ENCODE measurements at regions of chr14 and their contacts with region 1.

Region 1: GRCh38 chr14:21103710-21104447 is 3.0 kb downstream of the TMEM253 start:
- DNase-seq: peak; percentile 91
- ATAC-seq: peak; percentile 88
- H3K4me3 Mint-ChIP-seq: peak overlapping the region; percentile 79
- H3K27ac Mint-ChIP-seq: peak overlapping the region; percentile 90
- H3K4me1 Mint-ChIP-seq: peaks cover 21% of the 10 kb centered on the region
- H3K27me3 Mint-ChIP-seq: peaks cover 11% of the 10 kb centered on the region
- CTCF ChIP-seq: no peak

Region 2: DNA sequence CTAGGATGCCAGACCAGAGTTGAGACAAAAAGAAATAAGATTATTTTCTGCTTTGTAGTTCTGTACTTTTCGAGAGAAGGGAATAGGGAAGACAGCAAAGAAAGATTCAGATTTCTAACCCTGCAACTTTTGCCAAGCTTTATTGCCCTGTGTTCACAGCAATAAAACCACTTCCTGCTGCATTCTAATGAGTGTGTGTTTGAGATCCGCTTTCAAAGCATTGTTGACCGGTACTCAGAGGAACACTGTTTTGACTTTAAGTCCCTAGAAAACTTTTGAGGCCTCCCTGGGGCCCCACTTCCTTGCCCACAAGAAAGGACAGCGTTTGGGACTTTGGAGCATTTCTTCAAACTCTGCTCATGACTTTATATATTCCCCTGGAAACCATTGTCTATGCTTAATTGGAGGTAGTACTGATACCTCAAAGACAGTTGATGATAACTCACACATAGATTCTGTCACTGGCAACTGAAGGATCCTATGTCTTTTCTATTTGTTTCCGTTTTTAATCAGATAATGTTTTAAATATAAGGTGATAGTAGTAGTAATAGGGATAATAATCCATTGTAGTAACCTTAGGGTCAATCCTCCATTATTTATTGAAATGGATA is 321.5 kb before region 1 on chr14:
- CTCF ChIA-PET with region 1: no interaction called
- POLR2A ChIA-PET with region 1: no interaction called
- intact Hi-C with region 1: loop called (anchors 10 kb)
- DNase-seq: no peak
- ATAC-seq: peak; percentile 59
- H3K4me3 Mint-ChIP-seq: peak overlapping the region; percentile 86
- H3K27ac Mint-ChIP-seq: peak overlapping the region; percentile 98
- H3K4me1 Mint-ChIP-seq: peaks cover 68% of the 10 kb centered on the region
- H3K27me3 Mint-ChIP-seq: no peaks in the 10 kb centered on the region
- CTCF ChIP-seq: no peak

Region 3: GRCh38 chr14:20989572-20990551 is 114.0 kb before region 1 on chr14 and contains the start of gene METTL17:
- CTCF ChIA-PET with region 1: interaction called, 3 read pairs
- POLR2A ChIA-PET with region 1: no interaction called
- intact Hi-C with region 1: loop called (anchors 1 kb)
- DNase-seq: peak; percentile 68
- ATAC-seq: peak; percentile 97
- H3K4me3 Mint-ChIP-seq: peak within 1 kb of the TSS; percentile 94
- H3K27ac Mint-ChIP-seq: peak within 1 kb of the TSS; percentile 89
- H3K4me1 Mint-ChIP-seq: peaks cover 31% of the 10 kb centered on the region
- H3K27me3 Mint-ChIP-seq: no peaks in the 10 kb centered on the region
- CTCF ChIP-seq: no peak
- total RNA-seq, gene METTL17: 94.2 and 94.7 TPM in 2 replicates

Region 4: DNA sequence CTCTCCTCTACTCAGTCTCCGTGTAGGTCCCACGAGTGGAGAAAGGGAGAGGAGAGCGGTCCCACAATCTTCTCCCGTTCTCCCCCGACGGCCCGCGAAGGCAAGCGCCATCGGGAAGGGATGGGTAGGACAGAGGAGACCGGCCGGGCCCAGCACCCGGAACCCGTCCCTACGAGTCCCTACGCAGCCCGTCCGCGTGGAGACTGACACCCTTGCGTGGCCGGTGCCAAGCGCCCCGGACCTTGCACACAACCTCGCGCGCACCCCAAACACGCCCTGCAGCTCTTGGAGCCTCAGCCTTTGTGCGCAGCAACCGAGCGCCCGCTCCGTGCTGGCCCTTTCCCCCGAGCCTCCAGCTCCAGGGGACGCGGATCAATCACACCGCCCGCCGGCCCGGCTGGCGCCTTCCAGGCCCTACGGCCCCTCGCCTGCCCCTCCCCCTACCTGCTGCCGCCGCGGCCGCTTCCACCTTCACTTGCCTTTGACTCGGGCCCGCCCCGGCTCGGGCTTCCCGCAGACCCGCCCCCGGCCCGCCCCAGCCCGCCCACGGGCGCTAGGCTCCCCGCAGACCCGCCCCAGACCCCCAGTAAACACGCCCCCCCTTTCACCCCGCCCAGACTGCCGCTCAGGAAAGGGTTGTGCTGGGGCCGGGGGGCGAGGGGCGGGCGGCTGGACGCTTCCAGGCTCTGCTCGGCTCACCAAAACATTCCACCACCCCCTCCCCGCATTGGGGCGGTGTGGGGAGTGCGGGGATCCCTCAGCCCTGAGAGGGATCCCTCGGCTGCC is 79.1 kb before region 1 on chr14 and contains the start of gene NDRG2:
- CTCF ChIA-PET with region 1: interaction called, 257 read pairs
- POLR2A ChIA-PET with region 1: interaction called, 3 read pairs
- intact Hi-C with region 1: loop called (anchors 1 kb)
- DNase-seq: peak; percentile 64
- ATAC-seq: peak; percentile 92
- H3K4me3 Mint-ChIP-seq: peak within 1 kb of the TSS; percentile 88
- H3K27ac Mint-ChIP-seq: peak within 1 kb of the TSS; percentile 8
- H3K4me1 Mint-ChIP-seq: peaks cover 18% of the 10 kb centered on the region
- H3K27me3 Mint-ChIP-seq: peaks cover 25% of the 10 kb centered on the region
- CTCF ChIP-seq: no peak
- total RNA-seq, gene NDRG2: 2.1 and 3.9 TPM in 2 replicates

Region 5: GRCh38 chr14:21092273-21093011 is 11.4 kb before region 1 on chr14:
- CTCF ChIA-PET with region 1: interaction called, 71 read pairs
- POLR2A ChIA-PET with region 1: interaction called, 16 read pairs
- intact Hi-C with region 1: loop called (anchors 1 kb)
- DNase-seq: peak; percentile 94
- ATAC-seq: peak; percentile 99
- H3K4me3 Mint-ChIP-seq: no peak overlapping the region
- H3K27ac Mint-ChIP-seq: no peak overlapping the region
- H3K4me1 Mint-ChIP-seq: peaks cover 18% of the 10 kb centered on the region
- H3K27me3 Mint-ChIP-seq: no peaks in the 10 kb centered on the region
- CTCF ChIP-seq: peak; percentile 98

Region 6: DNA sequence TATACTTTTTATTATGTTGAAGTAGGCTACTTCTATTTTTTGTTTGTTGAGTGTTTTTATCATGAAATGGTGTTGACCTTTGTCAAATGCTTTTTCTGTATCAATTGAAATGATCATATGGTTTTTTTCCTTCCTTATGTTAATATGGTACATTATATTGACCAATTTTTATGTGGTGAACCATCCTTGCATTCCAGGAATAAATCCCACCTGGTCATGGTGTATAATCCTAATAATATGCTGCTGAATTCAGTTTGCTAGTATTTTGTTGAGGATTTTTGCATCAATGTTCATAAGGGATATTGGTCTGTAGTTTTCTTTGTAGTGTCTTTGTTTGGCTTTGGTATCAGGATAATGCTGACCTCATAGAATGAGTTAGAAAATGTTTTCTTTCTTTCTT is 41.6 kb after region 1 on chr14:
- CTCF ChIA-PET with region 1: no interaction called
- POLR2A ChIA-PET with region 1: no interaction called
- intact Hi-C with region 1: no loop called
- DNase-seq: no peak
- ATAC-seq: no peak
- H3K4me3 Mint-ChIP-seq: no peak overlapping the region
- H3K27ac Mint-ChIP-seq: no peak overlapping the region
- H3K4me1 Mint-ChIP-seq: no peaks in the 10 kb centered on the region
- H3K27me3 Mint-ChIP-seq: peaks cover 7% of the 10 kb centered on the region
- CTCF ChIP-seq: no peak

Region 7: GRCh38 chr14:21383848-21384493 is 280.1 kb after region 1 on chr14 and contains the start of gene SUPT16H:
- CTCF ChIA-PET with region 1: no interaction called
- POLR2A ChIA-PET with region 1: no interaction called
- intact Hi-C with region 1: loop called (anchors 1 kb)
- DNase-seq: peak; percentile 87
- ATAC-seq: peak; percentile 91
- H3K4me3 Mint-ChIP-seq: peak within 1 kb of the TSS; percentile 96
- H3K27ac Mint-ChIP-seq: peak within 1 kb of the TSS; percentile 99
- H3K4me1 Mint-ChIP-seq: peaks cover 40% of the 10 kb centered on the region
- H3K27me3 Mint-ChIP-seq: no peaks in the 10 kb centered on the region
- CTCF ChIP-seq: no peak
- total RNA-seq, gene SUPT16H: 100 and 102 TPM in 2 replicates

Measured in activated B cell treated with CpG ODN at 0.5 μM for 24 hours (primary cell).